Activated CD4-positive, alpha-beta T cell treated with anti-CD3 and anti-CD28 coated beads, Interleukin-2, amount 10 ng/mL, durations not matched to agents 24 days and 14 days (primary cell): ENCODE measurements at regions of chr15 and their contacts with region 1.

Region 1: GRCh38 chr15:40906091-40906990 is 12.1 kb downstream of the VPS18 start:
- DNase-seq: peak; percentile 90
- H3K4me3 Mint-ChIP-seq: peak overlapping the region; percentile 68
- H3K27ac Mint-ChIP-seq: peak overlapping the region; percentile 59
- H3K4me1 Mint-ChIP-seq: peaks cover 24% of the 10 kb centered on the region
- H3K27me3 Mint-ChIP-seq: no peaks in the 10 kb centered on the region

Region 2: GRCh38 chr15:40893733-40894688 is 12.3 kb before region 1 on chr15 and contains the start of gene VPS18:
- intact Hi-C with region 1: no loop called
- DNase-seq: peak; percentile 100
- H3K4me3 Mint-ChIP-seq: peak within 1 kb of the TSS; percentile 100
- H3K27ac Mint-ChIP-seq: peak within 1 kb of the TSS; percentile 95
- H3K4me1 Mint-ChIP-seq: peaks cover 32% of the 10 kb centered on the region
- H3K27me3 Mint-ChIP-seq: peaks cover 3% of the 10 kb centered on the region
- total RNA-seq, gene VPS18: 11.2 and 11.3 TPM in 2 replicates

Region 3: GRCh38 chr15:40918146-40918798 is 11.9 kb after region 1 on chr15:
- intact Hi-C with region 1: no loop called
- DNase-seq: no peak
- H3K4me3 Mint-ChIP-seq: no peak overlapping the region
- H3K27ac Mint-ChIP-seq: no peak overlapping the region
- H3K4me1 Mint-ChIP-seq: no peaks in the 10 kb centered on the region
- H3K27me3 Mint-ChIP-seq: peaks cover 9% of the 10 kb centered on the region

Region 4: DNA sequence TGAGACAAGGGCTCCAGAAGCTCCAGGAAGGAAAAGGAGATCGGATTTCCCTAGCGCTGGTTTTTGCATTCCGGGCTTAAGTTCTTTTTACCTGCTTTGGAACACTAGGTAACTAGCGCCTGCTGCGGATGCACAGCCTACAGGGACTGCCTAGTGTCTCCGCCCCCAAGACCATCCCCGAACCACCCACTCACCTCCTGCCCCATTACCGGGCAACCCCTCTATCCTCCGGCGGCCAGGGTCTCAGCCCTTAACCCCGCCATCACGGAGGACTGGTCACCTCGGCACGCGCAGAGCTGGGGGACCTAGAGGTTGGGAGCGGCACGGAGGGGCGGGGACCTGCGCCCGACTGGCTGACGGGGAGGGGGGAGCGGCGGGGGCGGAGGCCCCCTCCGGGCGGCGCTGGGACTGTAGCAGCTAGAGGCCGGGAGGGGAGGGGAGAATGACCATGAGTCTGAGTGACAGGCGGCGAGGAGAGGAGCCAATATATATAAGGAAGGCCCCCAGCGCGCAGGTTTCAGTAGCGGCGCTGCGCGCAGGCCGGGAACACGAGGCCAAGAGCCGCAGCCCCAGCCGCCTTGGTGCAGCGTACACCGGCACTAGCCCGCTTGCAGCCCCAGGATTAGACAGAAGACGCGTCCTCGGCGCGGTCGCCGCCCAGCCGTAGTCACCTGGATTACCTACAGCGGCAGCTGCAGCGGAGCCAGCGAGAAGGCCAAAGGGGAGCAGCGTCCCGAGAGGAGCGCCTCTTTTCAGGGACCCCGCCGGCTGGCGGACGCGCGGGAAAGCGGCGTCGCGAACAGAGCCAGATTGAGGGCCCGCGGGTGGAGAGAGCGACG is 22.7 kb after region 1 on chr15 and contains the start of gene DLL4:
- intact Hi-C with region 1: loop called (anchors 1 kb)
- DNase-seq: peak; percentile 82
- H3K4me3 Mint-ChIP-seq: peak within 1 kb of the TSS; percentile 80
- H3K27ac Mint-ChIP-seq: no peak within 1 kb of the TSS
- H3K4me1 Mint-ChIP-seq: peaks cover 39% of the 10 kb centered on the region
- H3K27me3 Mint-ChIP-seq: peaks cover 73% of the 10 kb centered on the region
- total RNA-seq, gene DLL4: 0.33 TPM in 1 of 2 replicates, not detected in the other

Region 5: DNA sequence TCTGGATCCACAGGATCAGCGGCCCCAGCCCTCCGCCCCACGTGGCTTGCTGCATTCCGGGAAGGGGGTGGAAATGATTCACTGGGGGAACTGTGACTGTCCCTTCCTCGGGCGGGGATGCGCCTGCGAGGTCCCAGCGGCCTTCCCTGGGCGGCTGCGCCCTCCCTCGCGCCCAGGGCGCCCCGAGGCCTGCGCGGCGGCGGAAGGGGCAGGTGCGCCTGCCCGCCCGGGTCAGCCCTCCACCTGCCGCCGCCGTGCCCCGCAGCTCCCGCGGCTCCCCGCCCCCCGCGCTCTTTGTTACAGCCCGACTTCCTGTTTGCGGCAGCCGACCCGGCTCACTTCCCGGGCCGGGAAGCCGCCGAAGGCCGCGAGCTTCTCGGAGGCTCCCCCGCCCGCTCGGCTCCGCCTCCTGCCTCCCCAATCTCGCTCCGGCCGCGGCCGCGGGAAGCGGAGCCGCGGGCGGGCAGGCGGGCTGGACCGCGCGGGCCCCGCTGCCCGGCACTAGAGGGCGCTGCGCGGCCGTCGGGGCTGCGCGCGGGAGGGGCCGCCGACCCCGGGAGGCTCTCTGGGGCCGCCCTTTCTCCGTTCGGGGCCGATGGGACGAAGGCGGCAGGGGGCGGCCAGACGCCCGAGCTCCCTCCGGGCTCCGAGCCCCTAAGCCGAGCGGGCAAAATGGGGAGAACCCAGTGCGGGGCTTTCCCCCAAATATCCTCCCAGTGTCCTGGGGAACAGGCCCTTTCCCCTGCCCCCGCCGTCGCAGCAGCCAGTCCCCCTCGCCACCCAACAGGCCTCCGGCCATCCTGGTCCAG is 35.4 kb after region 1 on chr15:
- intact Hi-C with region 1: loop called (anchors 1 kb)
- DNase-seq: peak; percentile 92
- H3K4me3 Mint-ChIP-seq: peak overlapping the region; percentile 88
- H3K27ac Mint-ChIP-seq: peak overlapping the region; percentile 87
- H3K4me1 Mint-ChIP-seq: peaks cover 40% of the 10 kb centered on the region
- H3K27me3 Mint-ChIP-seq: no peaks in the 10 kb centered on the region

Region 6: DNA sequence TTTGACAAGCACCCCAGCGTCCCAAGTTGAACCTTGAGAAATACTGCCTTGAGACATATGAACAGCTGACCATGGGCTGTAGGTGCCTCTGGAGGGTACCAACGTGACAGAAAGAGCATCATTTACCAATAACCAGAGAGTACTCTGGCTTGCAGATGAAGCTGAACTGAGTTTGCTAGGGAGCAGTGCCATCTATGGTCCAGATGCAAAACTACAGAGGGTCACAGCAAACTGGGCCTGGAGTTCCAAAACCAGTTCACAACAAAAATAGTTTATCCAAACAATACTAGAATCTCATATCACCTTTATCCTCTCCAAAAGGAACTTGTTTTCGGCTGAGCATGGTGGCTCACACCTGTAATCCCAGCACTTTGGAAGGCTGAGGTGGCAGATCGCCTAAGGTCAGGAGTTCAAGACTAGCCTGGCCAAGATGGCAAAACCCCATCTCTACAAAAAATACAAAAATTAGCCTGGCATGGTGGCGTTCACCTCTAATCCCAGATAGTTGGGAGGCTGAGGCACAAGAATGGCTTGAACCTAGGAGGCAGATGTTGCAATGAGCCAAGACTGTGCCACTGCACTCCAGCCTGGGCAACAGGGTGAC is 116.2 kb after region 1 on chr15:
- intact Hi-C with region 1: loop called (anchors 1 kb)
- DNase-seq: peak; percentile 84
- H3K4me3 Mint-ChIP-seq: no peak overlapping the region
- H3K27ac Mint-ChIP-seq: no peak overlapping the region
- H3K4me1 Mint-ChIP-seq: peaks cover 10% of the 10 kb centered on the region
- H3K27me3 Mint-ChIP-seq: no peaks in the 10 kb centered on the region

Region 7: GRCh38 chr15:41161336-41161735 is 255.0 kb after region 1 on chr15:
- intact Hi-C with region 1: no loop called
- DNase-seq: no peak
- H3K4me3 Mint-ChIP-seq: no peak overlapping the region
- H3K27ac Mint-ChIP-seq: no peak overlapping the region
- H3K4me1 Mint-ChIP-seq: peaks cover 14% of the 10 kb centered on the region
- H3K27me3 Mint-ChIP-seq: peaks cover 14% of the 10 kb centered on the region

Region 8: DNA sequence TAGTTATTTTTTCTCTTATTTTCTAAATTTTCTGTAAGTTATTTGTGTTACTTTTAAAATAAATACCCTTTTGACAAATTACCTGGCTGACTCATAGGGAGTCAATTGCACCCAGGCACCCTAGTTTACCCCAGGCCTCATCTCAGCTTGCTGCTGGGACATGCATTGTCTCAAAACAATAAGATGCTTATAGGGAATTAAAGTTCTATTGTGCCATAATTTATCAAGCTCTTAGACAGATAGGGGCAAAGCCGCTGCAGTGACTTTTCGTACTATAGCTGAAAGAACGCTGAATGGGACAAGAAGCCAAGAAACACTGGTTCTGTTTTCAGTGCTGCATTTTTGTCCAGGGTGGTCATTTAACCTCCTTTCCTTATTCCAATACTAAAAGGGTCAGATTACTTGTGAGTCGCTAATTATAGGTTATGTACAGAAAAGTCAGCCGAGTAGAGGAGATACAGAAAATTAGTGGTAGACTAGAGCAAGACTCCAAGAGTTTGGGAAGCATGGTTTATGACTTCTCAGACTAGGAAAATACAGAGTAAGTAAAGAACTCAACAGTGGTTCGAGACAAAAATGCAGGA is 274.0 kb after region 1 on chr15:
- intact Hi-C with region 1: loop called (anchors 1 kb)
- DNase-seq: no peak
- H3K4me3 Mint-ChIP-seq: no peak overlapping the region
- H3K27ac Mint-ChIP-seq: no peak overlapping the region
- H3K4me1 Mint-ChIP-seq: peaks cover 1% of the 10 kb centered on the region
- H3K27me3 Mint-ChIP-seq: peaks cover 5% of the 10 kb centered on the region

Region 9: GRCh38 chr15:41536866-41537265 is 630.5 kb after region 1 on chr15:
- intact Hi-C with region 1: no loop called
- DNase-seq: no peak
- H3K4me3 Mint-ChIP-seq: no peak overlapping the region
- H3K27ac Mint-ChIP-seq: no peak overlapping the region
- H3K4me1 Mint-ChIP-seq: peaks cover 13% of the 10 kb centered on the region
- H3K27me3 Mint-ChIP-seq: no peaks in the 10 kb centered on the region